ENCODE measurements at regions of chr3 and their contacts with region 1.

Region 1: GRCh38 chr3:62188681-62189383 is 184.5 kb downstream of the FEZF2 start:
- DNase-seq: peak; percentile 81
- ATAC-seq: peak; percentile 47

Region 2: DNA sequence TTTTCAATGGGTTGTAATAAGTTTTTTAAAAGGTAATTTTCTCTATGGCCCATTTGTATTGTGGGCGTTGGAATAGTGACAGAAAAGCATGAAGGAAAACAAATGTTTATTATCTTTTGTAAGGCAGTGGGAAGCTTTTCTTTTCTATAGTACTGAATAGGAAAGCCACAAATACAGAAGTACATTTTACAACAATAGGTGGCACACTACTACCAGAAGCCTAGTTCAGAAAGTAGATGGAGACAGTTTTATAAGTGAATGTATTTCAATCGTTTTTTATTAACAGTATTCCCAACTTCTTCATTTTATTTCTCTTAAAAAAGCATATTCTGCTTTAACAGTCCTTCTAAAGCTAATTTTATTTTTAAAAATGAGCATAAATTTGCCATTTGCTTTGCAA is 330.8 kb before region 1 on chr3:
- intact Hi-C with region 1: loop called (anchors 1 kb)
- DNase-seq: no peak
- ATAC-seq: no peak

Region 3: GRCh38 chr3:62131592-62131991 is 57.2 kb before region 1 on chr3:
- intact Hi-C with region 1: loop called (anchors 5 kb)
- DNase-seq: no peak
- ATAC-seq: no peak

Region 4: DNA sequence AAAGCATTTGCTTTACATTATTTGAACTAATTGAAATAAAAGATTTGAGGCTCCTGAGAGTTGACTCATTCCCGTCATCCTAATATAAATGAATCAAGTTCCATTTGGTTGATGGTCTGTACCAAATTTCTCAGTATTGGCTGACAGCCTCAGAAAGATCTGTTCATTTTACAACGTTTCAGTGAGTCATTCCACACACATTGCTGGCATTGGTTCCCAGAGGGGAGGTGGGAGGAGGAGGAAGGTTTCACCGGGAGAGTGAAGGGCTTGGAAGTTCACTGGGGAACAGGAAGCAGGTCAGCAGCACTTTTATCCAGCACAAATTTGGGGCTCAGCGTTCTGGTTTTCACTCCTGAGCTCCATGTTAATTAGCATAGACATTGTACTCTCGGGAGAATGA is 863.1 kb after region 1 on chr3:
- intact Hi-C with region 1: no loop called
- DNase-seq: no peak
- ATAC-seq: no peak

Measured in Right ventricle myocardium inferior (tissue), 1 donor.